ENCODE measurements at regions of chr1 and their contacts with region 1.

Region 1: GRCh38 chr1:211514030-211514754 is 22.2 kb upstream of the RD3 start:
- DNase-seq: peak; percentile 72
- ATAC-seq: peak; percentile 70 to 91 (median 85)
- H3K4me3 ChIP-seq: no peak overlapping the region
- H3K27ac ChIP-seq: peak overlapping the region in 1 of 10 donors; percentile 10
- H3K4me1 ChIP-seq: peaks cover 0 to 22% (median 9%) of the 10 kb centered on the region in 9 donors
- H3K27me3 ChIP-seq: peaks cover 0 to 13% (median 0%) of the 10 kb centered on the region in 7 donors
- CTCF ChIP-seq: peak; percentile 59 to 85 (median 76)

Region 2: DNA sequence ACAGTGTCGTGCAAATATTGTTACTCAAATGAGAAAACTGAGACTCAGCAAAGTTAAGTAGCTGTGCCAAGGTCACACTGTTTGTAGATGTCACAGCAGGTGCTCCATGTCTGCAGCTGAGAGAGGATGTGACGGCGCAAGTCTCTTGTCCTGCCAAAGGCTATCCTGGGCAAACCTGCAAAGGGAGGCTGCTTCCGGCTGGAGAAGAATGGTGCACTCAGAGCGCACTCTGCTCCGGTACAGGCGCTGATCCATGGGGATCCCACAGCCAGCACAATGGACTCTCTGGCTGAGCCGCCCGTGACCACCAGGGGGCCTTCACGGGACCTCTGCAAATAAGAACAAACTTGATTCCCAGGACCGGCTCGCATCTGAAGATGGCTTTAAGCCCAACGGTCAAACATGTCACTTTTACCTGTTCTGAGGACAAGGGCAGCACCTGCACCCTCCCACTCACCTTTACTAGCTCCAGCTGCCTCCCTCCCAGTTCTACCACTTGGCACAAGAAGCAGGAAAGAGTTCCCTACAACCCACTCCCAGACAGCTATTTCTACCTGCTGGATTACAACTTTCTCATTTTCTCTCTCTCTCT is 44.2 kb before region 1 on chr1:
- intact Hi-C with region 1: loop called in 6 of 10 experiments (anchors 2 to 5 kb)
- DNase-seq: peak; percentile 76 to 78
- ATAC-seq: peak; percentile 77 to 96 (median 92)
- H3K4me3 ChIP-seq: peak overlapping the region in 1 of 10 donors; percentile 20
- H3K27ac ChIP-seq: no peak overlapping the region
- H3K4me1 ChIP-seq: peaks cover 0 to 26% (median 19%) of the 10 kb centered on the region in 9 donors
- H3K27me3 ChIP-seq: peaks cover 0 to 3% (median 0%) of the 10 kb centered on the region in 7 donors
- CTCF ChIP-seq: peak; percentile 61 to 90 (median 86)

Region 3: DNA sequence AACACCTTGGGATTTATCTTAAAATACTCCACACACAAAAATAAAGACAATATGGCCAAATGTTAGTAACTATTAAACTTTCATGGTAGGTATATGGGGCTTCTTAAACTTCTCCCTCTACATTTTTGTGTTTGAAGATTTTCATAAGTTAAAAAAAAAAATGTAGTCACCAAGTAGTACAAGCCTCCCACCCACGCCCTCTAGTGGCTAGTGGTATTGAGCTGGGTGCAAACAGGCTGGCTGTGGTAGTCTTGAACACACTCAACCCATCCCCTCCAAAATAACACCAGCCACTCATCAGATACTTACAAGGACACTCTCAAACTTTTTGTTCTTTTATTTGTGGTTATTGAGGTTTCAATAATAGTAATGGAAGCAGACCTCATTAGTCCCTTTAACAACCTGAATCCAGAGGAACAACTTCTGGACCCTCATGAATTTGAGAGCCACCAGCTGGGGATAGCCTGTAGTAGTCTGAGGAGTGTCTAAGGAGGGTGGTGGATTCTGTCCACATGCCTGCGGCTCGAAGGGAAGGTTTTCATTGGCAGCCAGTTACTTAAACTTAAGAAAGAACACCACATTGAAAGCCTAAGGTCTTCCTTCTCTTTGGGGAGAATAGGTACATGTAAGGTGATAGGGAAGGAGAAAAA is 37.9 kb before region 1 on chr1:
- intact Hi-C with region 1: loop called in 6 of 10 experiments (anchors 2 to 5 kb)
- DNase-seq: peak; percentile 44 to 67
- ATAC-seq: peak in 4 of 8 donors; percentile 43 to 64 (median 57)
- H3K4me3 ChIP-seq: no peak overlapping the region
- H3K27ac ChIP-seq: no peak overlapping the region
- H3K4me1 ChIP-seq: peaks cover 0 to 9% (median 5%) of the 10 kb centered on the region in 9 donors
- H3K27me3 ChIP-seq: peaks cover 0 to 32% (median 20%) of the 10 kb centered on the region in 7 donors
- CTCF ChIP-seq: peak; percentile 54 to 92 (median 80)

Region 4: DNA sequence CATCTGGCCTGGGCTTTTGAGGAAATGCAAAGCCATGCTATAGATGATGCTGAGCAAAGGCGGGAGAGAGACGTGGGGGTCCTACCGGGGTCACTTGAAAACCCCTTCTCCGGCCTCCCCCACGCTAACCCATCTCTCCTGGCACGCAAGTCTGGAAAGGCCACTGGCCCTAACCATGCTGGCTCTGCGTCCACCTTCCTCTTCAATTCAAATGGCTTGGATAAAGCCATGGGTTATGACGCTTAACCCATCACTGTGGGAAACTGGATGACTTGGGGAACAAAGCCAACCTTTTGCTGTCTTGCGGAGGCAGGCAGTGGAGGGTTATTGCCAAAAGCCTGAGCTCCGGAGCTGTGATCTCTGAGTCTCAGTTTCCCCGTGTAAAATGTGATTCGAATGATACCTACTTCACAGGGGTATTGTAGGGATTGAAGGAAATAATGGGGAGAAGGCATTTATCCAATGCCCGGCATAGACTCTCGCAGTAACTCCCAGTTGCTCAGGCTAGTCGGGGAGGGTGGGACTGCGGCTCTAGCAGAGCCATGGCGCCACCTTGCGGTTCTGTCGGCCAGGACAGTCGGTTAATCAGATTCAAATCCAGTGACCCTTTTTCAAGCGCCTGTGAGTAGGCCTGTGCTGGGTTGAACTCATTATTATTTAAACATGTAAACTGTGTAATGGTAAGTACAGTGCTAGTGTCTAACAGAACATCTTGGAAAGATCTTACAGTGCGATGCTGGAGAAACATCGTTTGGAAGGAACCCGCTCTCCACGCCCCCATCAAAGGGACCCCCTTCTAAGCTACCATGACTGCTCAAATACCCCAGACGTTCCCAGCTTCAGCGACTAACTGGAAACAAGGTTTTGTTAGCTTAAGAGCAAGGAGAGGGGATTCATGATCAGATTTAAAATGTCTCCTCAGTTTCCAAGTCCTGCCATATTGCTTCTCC is 140.9 kb after region 1 on chr1:
- intact Hi-C with region 1: loop called in 9 of 10 experiments (anchors 1 to 5 kb)
- DNase-seq: peak; percentile 87
- ATAC-seq: peak; percentile 91 to 97 (median 95)
- H3K4me3 ChIP-seq: peak overlapping the region in 4 of 10 donors; percentile 7 to 48 (median 18)
- H3K27ac ChIP-seq: peak overlapping the region in 1 of 10 donors; percentile 7
- H3K4me1 ChIP-seq: peaks cover 0 to 9% (median 0%) of the 10 kb centered on the region in 9 donors
- H3K27me3 ChIP-seq: no peaks in the 10 kb centered on the region
- CTCF ChIP-seq: peak; percentile 88 to 95 (median 94)

Measured in heart right ventricle (tissue), 16 donors.